Activated T-helper 2 cell treated with anti-CD3 and anti-CD28 coated beads, Interferon-gamma antibody, Interleukin-2, Interleukin-4, amounts not matched to agents 10 μg/mL and 5 μg/mL and 100 μg/mL, durations not matched to agents 14 hours and 24 hours and 36 hours (primary cell): ENCODE measurements at regions of chr12 and their contacts with region 1.

Region 1: GRCh38 chr12:57751788-57752667 is at the start of gene CDK4:
- DNase-seq: peak; percentile 99
- H3K4me3 Mint-ChIP-seq: peak within 1 kb of the TSS; percentile 94
- H3K27ac Mint-ChIP-seq: peak within 1 kb of the TSS; percentile 92
- H3K4me1 Mint-ChIP-seq: peaks cover 50% of the 10 kb centered on the region
- H3K27me3 Mint-ChIP-seq: peaks cover 2% of the 10 kb centered on the region
- total RNA-seq, gene CDK4: 180 and 201 TPM in 2 replicates

Region 2: DNA sequence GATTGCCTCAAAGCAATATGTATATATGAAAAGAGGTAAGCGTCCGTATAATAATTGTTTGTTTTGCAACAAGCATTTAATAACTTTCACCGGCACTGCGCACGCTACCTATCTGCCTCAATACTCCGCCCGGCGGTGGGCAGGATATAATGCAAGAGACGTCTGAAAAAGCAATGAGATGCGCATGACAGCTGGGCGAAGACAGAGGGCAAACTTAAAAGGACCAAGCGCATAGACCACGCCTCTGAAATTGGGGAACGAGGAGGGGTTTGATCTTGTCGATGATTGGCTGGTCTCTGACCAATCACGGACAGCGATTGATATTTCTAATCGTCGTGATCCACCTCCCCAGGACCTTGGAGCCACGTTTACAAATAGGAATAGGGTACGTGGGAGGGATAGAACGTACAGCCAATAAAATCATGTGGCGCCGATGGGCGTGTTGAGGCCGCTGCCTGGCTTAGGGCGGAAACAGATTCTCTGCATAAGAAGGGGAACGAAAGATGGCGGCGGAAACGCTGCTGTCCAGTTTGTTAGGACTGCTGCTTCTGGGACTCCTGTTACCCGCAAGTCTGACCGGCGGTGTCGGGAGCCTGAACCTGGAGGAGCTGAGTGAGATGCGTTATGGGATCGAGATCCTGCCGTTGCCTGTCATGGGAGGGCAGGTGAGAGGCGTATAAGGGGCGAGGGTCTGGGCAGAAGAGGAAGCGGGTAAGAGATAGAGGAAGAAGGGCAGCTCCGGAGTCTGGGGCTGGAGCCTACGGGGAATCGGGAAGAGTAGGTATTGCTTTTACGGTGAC is 58.2 kb before region 1 on chr12 and contains the start of gene OS9:
- intact Hi-C with region 1: loop called (anchors 1 kb)
- DNase-seq: peak; percentile 96
- H3K4me3 Mint-ChIP-seq: no peak within 1 kb of the TSS
- H3K27ac Mint-ChIP-seq: no peak within 1 kb of the TSS
- H3K4me1 Mint-ChIP-seq: no peaks in the 10 kb centered on the region
- H3K27me3 Mint-ChIP-seq: peaks cover 13% of the 10 kb centered on the region
- total RNA-seq, gene OS9: 97.4 and 99.1 TPM in 2 replicates

Region 3: GRCh38 chr12:57712701-57713100 is 39.3 kb before region 1 on chr12:
- intact Hi-C with region 1: no loop called
- DNase-seq: no peak
- H3K4me3 Mint-ChIP-seq: no peak overlapping the region
- H3K27ac Mint-ChIP-seq: no peak overlapping the region
- H3K4me1 Mint-ChIP-seq: peaks cover 3% of the 10 kb centered on the region
- H3K27me3 Mint-ChIP-seq: no peaks in the 10 kb centered on the region

Region 4: GRCh38 chr12:57765042-57765697 is 13.1 kb after region 1 on chr12:
- intact Hi-C with region 1: loop called (anchors 1 kb)
- DNase-seq: no peak
- H3K4me3 Mint-ChIP-seq: peak overlapping the region; percentile 87
- H3K27ac Mint-ChIP-seq: peak overlapping the region; percentile 66
- H3K4me1 Mint-ChIP-seq: peaks cover 14% of the 10 kb centered on the region
- H3K27me3 Mint-ChIP-seq: peaks cover 5% of the 10 kb centered on the region

Region 5: GRCh38 chr12:57771708-57772428 is 19.8 kb after region 1 on chr12 and contains the start of gene METTL1:
- intact Hi-C with region 1: loop called (anchors 1 kb)
- DNase-seq: peak; percentile 90
- H3K4me3 Mint-ChIP-seq: peak within 1 kb of the TSS; percentile 97
- H3K27ac Mint-ChIP-seq: peak within 1 kb of the TSS; percentile 99
- H3K4me1 Mint-ChIP-seq: peaks cover 11% of the 10 kb centered on the region
- H3K27me3 Mint-ChIP-seq: no peaks in the 10 kb centered on the region
- total RNA-seq, gene METTL1: 61.2 and 64.5 TPM in 2 replicates

Region 6: GRCh38 chr12:57782608-57783465 is 30.8 kb after region 1 on chr12 and contains the start of gene TSFM:
- intact Hi-C with region 1: loop called (anchors 1 kb)
- DNase-seq: peak; percentile 94
- H3K4me3 Mint-ChIP-seq: peak within 1 kb of the TSS; percentile 98
- H3K27ac Mint-ChIP-seq: peak within 1 kb of the TSS; percentile 95
- H3K4me1 Mint-ChIP-seq: peaks cover 21% of the 10 kb centered on the region
- H3K27me3 Mint-ChIP-seq: no peaks in the 10 kb centered on the region
- total RNA-seq, gene TSFM: 44.9 and 52.7 TPM in 2 replicates

Region 7: GRCh38 chr12:58262796-58263195 is 510.8 kb after region 1 on chr12:
- intact Hi-C with region 1: no loop called
- DNase-seq: no peak
- H3K4me3 Mint-ChIP-seq: no peak overlapping the region
- H3K27ac Mint-ChIP-seq: no peak overlapping the region
- H3K4me1 Mint-ChIP-seq: no peaks in the 10 kb centered on the region
- H3K27me3 Mint-ChIP-seq: no peaks in the 10 kb centered on the region